ENCODE measurements at regions of chr19 and their contacts with region 1.

Region 1: GRCh38 chr19:46728693-46729676 is 12.1 kb upstream of the PRKD2 start:
- DNase-seq: peak; percentile 59 to 69 (median 69)
- H3K4me3 ChIP-seq: no peak overlapping the region
- H3K4me3 Mint-ChIP-seq: no peak overlapping the region
- H3K27ac ChIP-seq: no peak overlapping the region
- H3K27ac Mint-ChIP-seq: peak overlapping the region in 5 of 7 donors; percentile 12 to 73 (median 26)
- H3K4me1 ChIP-seq: peaks cover 52 to 57% of the 10 kb centered on the region in 2 donors
- H3K4me1 Mint-ChIP-seq: peaks cover 57% of the 10 kb centered on the region
- H3K27me3 ChIP-seq: no peaks in the 10 kb centered on the region
- H3K27me3 Mint-ChIP-seq: peaks cover 2% of the 10 kb centered on the region in 3 donors
- CTCF ChIP-seq: peak; percentile 99

Region 2: GRCh38 chr19:46614114-46614722 is 114.8 kb before region 1 on chr19:
- intact Hi-C with region 1: loop called in 1 of 2 experiments (anchors 5 kb)
- DNase-seq: peak; percentile 73 to 81 (median 76)
- H3K4me3 ChIP-seq: no peak overlapping the region
- H3K4me3 Mint-ChIP-seq: peak overlapping the region in 1 of 2 donors; percentile 65
- H3K27ac ChIP-seq: no peak overlapping the region
- H3K27ac Mint-ChIP-seq: peak overlapping the region in 1 of 7 donors; percentile 47
- H3K4me1 ChIP-seq: peaks cover 49 to 50% of the 10 kb centered on the region in 2 donors
- H3K4me1 Mint-ChIP-seq: peaks cover 50% of the 10 kb centered on the region
- H3K27me3 ChIP-seq: peaks cover 0 to 24% of the 10 kb centered on the region in 2 donors
- H3K27me3 Mint-ChIP-seq: peaks cover 28 to 48% (median 39%) of the 10 kb centered on the region in 3 donors
- CTCF ChIP-seq: peak; percentile 89

Region 3: DNA sequence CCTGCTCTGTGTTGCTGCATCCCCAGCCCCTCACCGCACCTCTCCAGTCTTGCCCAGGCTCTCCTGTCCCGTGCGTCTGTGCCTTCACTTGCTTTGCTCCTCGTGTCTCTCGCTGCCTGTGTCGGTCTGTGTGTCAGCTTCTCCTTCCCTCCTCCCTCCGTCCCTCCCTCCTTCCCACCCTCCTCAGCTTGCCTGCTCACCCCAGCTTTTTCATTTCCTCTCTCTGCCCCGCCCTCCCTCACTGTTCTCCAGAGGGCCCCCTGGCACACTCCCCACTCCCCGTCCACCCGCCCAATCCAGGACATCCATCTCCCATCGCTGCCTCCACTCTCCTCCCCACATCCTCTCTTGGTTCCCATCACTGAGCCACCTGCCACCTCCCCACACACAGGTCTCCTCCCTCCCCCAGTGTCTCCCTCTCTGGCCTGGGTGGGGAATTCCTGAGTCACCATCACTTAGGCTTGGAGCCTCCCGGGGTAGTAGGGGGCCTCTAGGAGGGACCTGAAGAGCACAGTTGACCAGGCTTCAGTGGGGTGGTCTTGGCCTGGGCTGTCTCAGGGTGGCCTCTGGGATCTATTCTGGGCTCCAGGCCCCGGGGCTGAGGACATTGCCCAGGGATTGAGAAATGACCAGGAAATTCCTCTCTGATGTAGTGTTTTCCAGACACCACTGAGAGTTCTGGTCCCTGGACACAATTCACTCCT is 103.9 kb before region 1 on chr19 and contains the start of gene PTGIR:
- intact Hi-C with region 1: no loop called
- DNase-seq: peak; percentile 62 to 78 (median 68)
- H3K4me3 ChIP-seq: peak within 1 kb of the TSS; percentile 44 to 75 (median 48)
- H3K4me3 Mint-ChIP-seq: peak within 1 kb of the TSS; percentile 87 to 100
- H3K27ac ChIP-seq: peak within 1 kb of the TSS; percentile 69 to 75
- H3K27ac Mint-ChIP-seq: peak within 1 kb of the TSS; percentile 88 to 96 (median 92)
- H3K4me1 ChIP-seq: peaks cover 69 to 75% of the 10 kb centered on the region in 2 donors
- H3K4me1 Mint-ChIP-seq: peaks cover 73% of the 10 kb centered on the region
- H3K27me3 ChIP-seq: no peaks in the 10 kb centered on the region
- H3K27me3 Mint-ChIP-seq: peaks cover 6 to 8% (median 7%) of the 10 kb centered on the region in 3 donors
- CTCF ChIP-seq: no peak
- polyA plus RNA-seq, gene PTGIR: 12.8 to 51.2 (median 14.1) TPM

Region 4: DNA sequence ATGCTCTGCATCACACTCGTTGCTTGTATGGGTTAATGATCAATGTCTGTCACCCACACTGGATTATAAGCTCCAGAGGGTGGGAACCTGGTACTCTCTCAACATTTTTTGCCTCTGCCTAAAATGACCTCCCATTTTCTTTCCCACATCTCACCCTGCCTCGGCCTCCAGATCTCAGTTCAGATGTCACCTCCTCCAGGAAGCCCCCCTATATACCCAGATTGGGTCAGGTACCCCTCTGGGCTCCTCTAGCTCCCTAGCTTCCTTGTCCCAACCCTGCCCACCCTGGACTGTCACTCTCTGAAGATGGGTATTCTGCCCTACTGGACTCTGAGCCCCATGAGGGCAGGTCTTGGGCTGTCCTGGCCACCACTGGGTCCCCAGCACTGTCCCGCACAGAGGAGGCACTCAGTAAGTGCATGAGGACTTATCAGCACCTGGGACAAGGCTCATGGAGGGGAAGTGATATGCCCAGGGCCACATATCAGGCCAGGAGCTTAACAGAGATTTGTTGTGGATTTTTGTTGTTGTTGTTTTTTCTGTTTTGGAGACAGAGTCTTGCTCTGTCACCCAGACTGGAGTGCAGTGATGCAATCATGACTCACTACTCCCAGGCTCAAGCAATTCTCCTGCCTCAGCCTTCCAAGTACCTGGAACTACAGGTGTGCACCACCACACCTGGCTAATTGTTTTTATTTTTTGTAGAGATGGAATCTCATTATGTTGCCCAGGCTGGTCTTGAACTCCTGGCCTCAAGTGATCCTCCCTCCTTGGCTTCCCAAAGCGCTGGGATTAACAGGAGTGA is 35.9 kb before region 1 on chr19:
- intact Hi-C with region 1: no loop called
- DNase-seq: no peak
- H3K4me3 ChIP-seq: no peak overlapping the region
- H3K4me3 Mint-ChIP-seq: no peak overlapping the region
- H3K27ac ChIP-seq: no peak overlapping the region
- H3K27ac Mint-ChIP-seq: no peak overlapping the region
- H3K4me1 ChIP-seq: peaks cover 0 to 2% of the 10 kb centered on the region in 2 donors
- H3K4me1 Mint-ChIP-seq: peaks cover 3% of the 10 kb centered on the region
- H3K27me3 ChIP-seq: no peaks in the 10 kb centered on the region
- H3K27me3 Mint-ChIP-seq: peaks cover 0 to 4% (median 2%) of the 10 kb centered on the region in 3 donors
- CTCF ChIP-seq: no peak

Region 5: DNA sequence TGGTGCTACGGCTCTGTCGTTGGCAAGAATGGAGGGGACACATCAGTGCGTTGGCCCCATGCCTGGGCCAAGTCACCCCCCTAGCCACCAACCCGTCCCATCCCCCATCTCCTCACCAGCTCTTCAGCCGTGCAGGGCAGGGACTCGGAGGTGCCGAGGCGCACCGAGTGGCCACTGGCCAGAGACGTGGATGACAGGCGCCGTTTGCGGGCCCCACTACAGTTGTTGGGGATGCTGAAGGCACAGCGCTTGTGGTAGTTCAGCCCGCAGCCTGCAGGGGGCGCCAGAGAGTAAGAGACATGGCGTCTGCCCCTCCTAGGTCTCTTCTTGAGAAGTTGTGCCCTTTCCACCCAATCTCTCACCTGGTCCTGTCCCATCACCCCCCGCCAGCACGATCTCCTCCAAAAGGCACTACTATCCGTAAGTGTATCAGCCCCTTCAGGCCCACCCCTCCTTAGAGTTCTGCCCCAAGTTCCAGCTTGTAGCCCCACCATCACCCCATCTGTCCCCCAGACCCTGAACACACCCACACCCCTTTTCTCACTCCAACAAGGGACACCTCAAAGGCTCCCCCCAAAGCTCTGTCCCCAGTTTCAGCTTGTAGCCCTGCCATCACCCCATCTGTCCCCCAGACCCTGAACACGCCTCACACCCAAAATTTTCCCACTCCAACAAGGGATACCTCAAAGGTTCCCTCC is 24.5 kb before region 1 on chr19:
- intact Hi-C with region 1: loop called in 1 of 2 experiments (anchors 1 kb)
- DNase-seq: peak; percentile 60 to 71 (median 68)
- H3K4me3 ChIP-seq: no peak overlapping the region
- H3K4me3 Mint-ChIP-seq: no peak overlapping the region
- H3K27ac ChIP-seq: no peak overlapping the region
- H3K27ac Mint-ChIP-seq: peak overlapping the region in 3 of 7 donors; percentile 20 to 85 (median 60)
- H3K4me1 ChIP-seq: no peaks in the 10 kb centered on the region
- H3K4me1 Mint-ChIP-seq: peaks cover 3% of the 10 kb centered on the region
- H3K27me3 ChIP-seq: no peaks in the 10 kb centered on the region
- H3K27me3 Mint-ChIP-seq: no peaks in the 10 kb centered on the region
- CTCF ChIP-seq: peak; percentile 97

Region 6: DNA sequence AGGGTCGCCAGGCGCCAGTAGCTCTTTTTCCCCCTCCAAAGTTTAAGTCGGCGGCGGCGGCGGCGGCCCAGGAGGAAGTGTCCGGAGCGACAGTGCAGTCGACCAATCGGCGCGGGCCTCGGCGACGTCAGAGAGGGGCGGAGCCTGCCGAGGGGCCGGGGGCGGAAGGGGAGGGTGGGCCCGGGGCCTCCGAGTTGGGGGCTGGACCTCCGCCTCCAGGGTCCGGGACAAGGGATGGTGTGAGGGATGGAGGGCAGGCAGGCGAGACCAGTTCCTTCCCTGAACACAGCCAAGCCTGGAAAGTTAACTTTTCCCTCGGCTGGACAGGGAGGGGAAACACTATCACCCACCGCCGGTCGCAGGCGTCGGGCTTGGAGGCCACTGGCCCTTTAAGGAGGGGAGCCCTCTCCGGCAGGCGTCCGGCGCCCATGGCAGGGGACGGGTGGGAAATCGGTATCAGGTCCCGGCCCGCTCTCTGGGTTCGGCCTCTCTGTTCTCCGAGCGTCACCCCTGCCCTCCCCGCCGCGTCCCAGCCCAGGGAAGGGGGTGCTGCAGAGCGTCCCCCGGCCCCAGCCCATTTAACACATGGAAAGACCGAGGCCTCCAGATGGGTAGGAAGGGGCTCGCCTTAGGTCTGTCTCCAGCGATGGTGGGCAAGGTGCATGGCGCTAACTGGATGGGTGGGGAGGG is 11.8 kb before region 1 on chr19 and contains the start of gene PRKD2:
- intact Hi-C with region 1: loop called (anchors 2 kb)
- DNase-seq: peak; percentile 69 to 77 (median 69)
- H3K4me3 ChIP-seq: peak within 1 kb of the TSS; percentile 78 to 94 (median 81)
- H3K4me3 Mint-ChIP-seq: peak within 1 kb of the TSS; percentile 94 to 96
- H3K27ac ChIP-seq: peak within 1 kb of the TSS; percentile 64 to 89
- H3K27ac Mint-ChIP-seq: peak within 1 kb of the TSS; percentile 83 to 94 (median 91)
- H3K4me1 ChIP-seq: peaks cover 57 to 67% of the 10 kb centered on the region in 2 donors
- H3K4me1 Mint-ChIP-seq: peaks cover 58% of the 10 kb centered on the region
- H3K27me3 ChIP-seq: peaks cover 0 to 10% of the 10 kb centered on the region in 2 donors
- H3K27me3 Mint-ChIP-seq: peaks cover 9 to 23% (median 13%) of the 10 kb centered on the region in 3 donors
- CTCF ChIP-seq: no peak
- polyA plus RNA-seq, gene PRKD2: 6.5 to 46.9 (median 8.1) TPM

Region 7: GRCh38 chr19:46746281-46747013 is 17.5 kb after region 1 on chr19 and contains the start of gene STRN4:
- intact Hi-C with region 1: loop called (anchors 1 to 2 kb)
- DNase-seq: peak in 2 of 3 donors; percentile 49 to 56
- H3K4me3 ChIP-seq: peak within 1 kb of the TSS; percentile 85 to 97 (median 97)
- H3K4me3 Mint-ChIP-seq: peak within 1 kb of the TSS; percentile 98 to 99
- H3K27ac ChIP-seq: peak within 1 kb of the TSS in 1 of 2 donors; percentile 81
- H3K27ac Mint-ChIP-seq: peak within 1 kb of the TSS; percentile 84 to 96 (median 90)
- H3K4me1 ChIP-seq: peaks cover 42 to 47% of the 10 kb centered on the region in 2 donors
- H3K4me1 Mint-ChIP-seq: peaks cover 49% of the 10 kb centered on the region
- H3K27me3 ChIP-seq: no peaks in the 10 kb centered on the region
- H3K27me3 Mint-ChIP-seq: peaks cover 0 to 1% (median 0%) of the 10 kb centered on the region in 3 donors
- CTCF ChIP-seq: no peak
- polyA plus RNA-seq, gene STRN4: 37.5 to 239 (median 48.0) TPM

Measured in CD14-positive monocyte (primary cell).